IMR-90 (cell line): ENCODE measurements at regions of chr1 and their contacts with region 1.

Region 1: DNA sequence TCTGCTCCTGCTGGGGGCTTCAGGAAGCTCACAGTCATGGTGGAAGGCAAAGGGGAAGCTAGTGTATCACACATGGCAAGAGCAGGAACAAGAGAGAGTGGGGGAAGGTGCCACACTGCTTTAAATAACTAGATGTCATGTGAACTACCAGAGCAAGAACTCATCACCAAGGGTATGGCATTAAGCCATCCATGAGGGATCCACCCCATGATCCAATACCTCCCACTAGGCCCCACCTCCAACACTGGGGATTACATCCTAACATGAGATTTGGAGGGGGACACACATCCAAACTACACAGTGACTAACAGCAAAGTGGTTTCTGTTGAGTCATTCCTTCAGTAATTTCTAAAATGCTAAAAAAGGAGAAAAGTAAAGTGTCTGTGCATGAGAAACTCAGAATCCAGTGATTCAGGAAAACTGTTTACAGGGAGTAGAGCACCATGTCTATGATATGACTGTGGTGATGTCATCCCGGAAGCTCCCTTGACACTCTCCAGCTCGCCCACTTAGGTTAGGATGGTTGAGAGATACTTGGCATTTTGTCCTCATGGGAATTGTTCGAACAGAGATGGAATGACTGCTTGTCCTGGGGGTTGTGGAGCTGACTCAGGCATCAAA is 50.3 kb downstream of the CHD1L start:
- DNase-seq: peak; percentile 99
- ATAC-seq: peak; percentile 89
- H3K4me3 ChIP-seq: no peak overlapping the region
- H3K27ac ChIP-seq: peak overlapping the region; percentile 92
- H3K4me1 ChIP-seq: peaks cover 8% of the 10 kb centered on the region
- H3K27me3 ChIP-seq: no peaks in the 10 kb centered on the region
- CTCF ChIP-seq: no peak
- POLR2A ChIP-seq: peak; percentile 83
- RAD21 ChIP-seq: peak; percentile 7; the same call in 1 of the 2 replicates

Region 2: GRCh38 chr1:147242439-147243227 is 50.1 kb before region 1 on chr1 and contains the start of gene CHD1L:
- CTCF ChIA-PET with region 1: no interaction called
- POLR2A ChIA-PET with region 1: no interaction called
- dilution Hi-C with region 1: no loop called
- in situ Hi-C with region 1: no loop called
- intact Hi-C with region 1: loop called (anchors 2 kb)
- DNase-seq: peak; percentile 95
- ATAC-seq: peak; percentile 94
- H3K4me3 ChIP-seq: peak within 1 kb of the TSS; percentile 70
- H3K27ac ChIP-seq: peak within 1 kb of the TSS; percentile 70
- H3K4me1 ChIP-seq: peaks cover 7% of the 10 kb centered on the region
- H3K27me3 ChIP-seq: no peaks in the 10 kb centered on the region
- CTCF ChIP-seq: peak; percentile 98
- POLR2A ChIP-seq: peak; percentile 76
- RAD21 ChIP-seq: peak; percentile 93
- total RNA-seq, gene CHD1L: 47.5 and 51.7 TPM in 2 replicates

Region 3: DNA sequence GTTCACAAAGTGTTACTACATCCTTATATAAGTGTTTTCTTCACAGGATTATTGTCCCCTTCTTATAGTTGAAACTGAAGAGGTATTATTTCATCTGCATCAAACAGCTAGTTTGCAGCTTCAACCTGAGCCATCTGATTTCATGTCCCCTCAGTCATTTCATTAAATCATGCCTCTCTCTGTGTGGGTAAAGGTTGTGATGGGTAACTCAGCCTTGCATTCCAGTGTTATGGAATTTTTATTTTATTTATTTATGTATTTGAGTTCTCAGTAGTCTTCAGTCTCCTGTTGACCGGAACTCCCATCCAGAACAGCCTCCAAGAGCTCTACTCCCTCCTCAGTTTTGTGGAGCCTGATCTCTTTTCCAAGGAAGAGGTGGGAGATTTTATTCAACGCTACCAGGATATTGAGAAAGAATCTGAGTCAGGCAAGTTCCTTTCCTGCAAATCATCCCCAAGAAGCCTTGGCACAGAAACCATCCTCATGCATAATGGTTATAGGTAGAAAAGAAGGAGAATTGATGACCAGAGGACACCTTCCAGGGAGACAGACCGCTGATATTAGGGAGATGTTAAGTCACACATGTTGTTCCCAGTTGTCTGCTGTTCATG is 28.5 kb before region 1 on chr1:
- CTCF ChIA-PET with region 1: no interaction called
- POLR2A ChIA-PET with region 1: no interaction called
- dilution Hi-C with region 1: no loop called
- in situ Hi-C with region 1: no loop called
- intact Hi-C with region 1: loop called (anchors 5 kb)
- DNase-seq: peak; percentile 82
- ATAC-seq: peak; percentile 86
- H3K4me3 ChIP-seq: no peak overlapping the region
- H3K27ac ChIP-seq: no peak overlapping the region; the same call in 1 of the 2 replicates
- H3K4me1 ChIP-seq: peaks cover 4% of the 10 kb centered on the region; the same call in 1 of the 2 replicates
- H3K27me3 ChIP-seq: no peaks in the 10 kb centered on the region
- CTCF ChIP-seq: no peak
- POLR2A ChIP-seq: no peak
- RAD21 ChIP-seq: no peak

Region 4: GRCh38 chr1:147273409-147274336 is 19.1 kb before region 1 on chr1:
- CTCF ChIA-PET with region 1: interaction called, 3 read pairs
- POLR2A ChIA-PET with region 1: no interaction called
- dilution Hi-C with region 1: no loop called
- in situ Hi-C with region 1: no loop called
- intact Hi-C with region 1: loop called (anchors 2 kb)
- DNase-seq: peak; percentile 87
- ATAC-seq: peak; percentile 90
- H3K4me3 ChIP-seq: no peak overlapping the region
- H3K27ac ChIP-seq: peak overlapping the region; percentile 51; the same call in 1 of the 2 replicates
- H3K4me1 ChIP-seq: peaks cover 6% of the 10 kb centered on the region
- H3K27me3 ChIP-seq: no peaks in the 10 kb centered on the region
- CTCF ChIP-seq: peak; percentile 59
- POLR2A ChIP-seq: no peak
- RAD21 ChIP-seq: peak; percentile 73

Region 5: GRCh38 chr1:147389532-147390524 is 97.1 kb after region 1 on chr1:
- CTCF ChIA-PET with region 1: interaction called, 5 read pairs
- POLR2A ChIA-PET with region 1: no interaction called
- dilution Hi-C with region 1: no loop called
- in situ Hi-C with region 1: loop called (anchors 25 kb)
- intact Hi-C with region 1: no loop called
- DNase-seq: peak; percentile 58
- ATAC-seq: peak; percentile 100
- H3K4me3 ChIP-seq: no peak overlapping the region
- H3K27ac ChIP-seq: no peak overlapping the region
- H3K4me1 ChIP-seq: no peaks in the 10 kb centered on the region
- H3K27me3 ChIP-seq: peaks cover 1% of the 10 kb centered on the region; the same call in 1 of the 2 replicates
- CTCF ChIP-seq: peak; percentile 74
- POLR2A ChIP-seq: no peak
- RAD21 ChIP-seq: peak; percentile 82

Region 6: GRCh38 chr1:147670317-147671041 is 377.7 kb after region 1 on chr1 and contains the start of gene ACP6:
- CTCF ChIA-PET with region 1: no interaction called
- POLR2A ChIA-PET with region 1: no interaction called
- dilution Hi-C with region 1: no loop called
- in situ Hi-C with region 1: no loop called
- intact Hi-C with region 1: loop called (anchors 10 kb)
- DNase-seq: peak; percentile 94
- ATAC-seq: peak; percentile 98
- H3K4me3 ChIP-seq: peak within 1 kb of the TSS; percentile 64
- H3K27ac ChIP-seq: peak within 1 kb of the TSS; percentile 55
- H3K4me1 ChIP-seq: 0 out of 2 replicates have a peak, but pooled peaks cover 2% of the 10 kb centered on the region
- H3K27me3 ChIP-seq: no peaks in the 10 kb centered on the region
- CTCF ChIP-seq: no peak
- POLR2A ChIP-seq: no peak
- RAD21 ChIP-seq: no peak
- total RNA-seq, gene ACP6: 2.5 and 3.6 TPM in 2 replicates

Region 7: GRCh38 chr1:148315071-148315811 is 1022.5 kb after region 1 on chr1:
- CTCF ChIA-PET with region 1: no interaction called
- POLR2A ChIA-PET with region 1: no interaction called
- dilution Hi-C with region 1: no loop called
- in situ Hi-C with region 1: no loop called
- intact Hi-C with region 1: no loop called
- DNase-seq: no peak
- ATAC-seq: no peak
- H3K4me3 ChIP-seq: no peak overlapping the region
- H3K27ac ChIP-seq: no peak overlapping the region
- H3K4me1 ChIP-seq: no peaks in the 10 kb centered on the region
- H3K27me3 ChIP-seq: peaks cover 28% of the 10 kb centered on the region
- CTCF ChIP-seq: no peak
- POLR2A ChIP-seq: no peak
- RAD21 ChIP-seq: no peak